Heart right ventricle (tissue), 16 donors: ENCODE measurements at regions of chr10 and their contacts with region 1.

Region 1: DNA sequence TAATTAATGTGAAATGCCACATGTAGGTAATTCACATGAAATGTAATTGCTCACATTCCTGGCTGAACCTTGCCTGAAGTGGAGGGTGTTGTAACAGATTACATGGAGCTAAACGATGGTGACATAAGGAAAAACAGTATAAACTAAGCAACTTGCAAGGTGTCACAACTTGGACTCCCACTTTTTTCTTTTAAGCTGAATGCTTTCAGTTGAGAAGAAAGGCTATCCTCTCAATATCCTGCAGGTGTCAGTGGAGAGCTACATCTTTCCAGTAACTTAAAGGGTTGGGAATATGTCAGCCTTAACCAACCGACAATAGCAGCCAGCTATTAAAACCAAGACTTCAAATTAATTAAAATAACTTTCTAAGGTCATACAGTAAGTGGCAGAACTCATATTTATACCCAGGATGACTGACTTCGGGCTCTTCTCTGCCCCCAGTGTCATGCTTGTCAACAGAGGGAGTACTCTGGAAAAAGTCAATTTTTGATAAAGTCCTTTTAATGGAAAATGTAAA is 33.7 kb downstream of the NRBF2 start:
- DNase-seq: peak in 1 of 2 donors; percentile 61
- ATAC-seq: peak in 7 of 8 donors; percentile 56 to 71 (median 66)
- H3K4me3 ChIP-seq: no peak overlapping the region
- H3K27ac ChIP-seq: no peak overlapping the region
- H3K4me1 ChIP-seq: peaks cover 0 to 39% (median 20%) of the 10 kb centered on the region in 9 donors
- H3K27me3 ChIP-seq: no peaks in the 10 kb centered on the region
- CTCF ChIP-seq: peak; percentile 41 to 91 (median 87)

Region 2: GRCh38 chr10:63767138-63767801 is 600.5 kb after region 1 on chr10:
- intact Hi-C with region 1: loop called in 2 of 10 experiments (anchors 5 kb)
- DNase-seq: no peak
- ATAC-seq: peak in 5 of 8 donors; percentile 34 to 67 (median 57)
- H3K4me3 ChIP-seq: no peak overlapping the region
- H3K27ac ChIP-seq: peak overlapping the region in 8 of 10 donors; percentile 18 to 65 (median 42)
- H3K4me1 ChIP-seq: peaks cover 0 to 23% (median 6%) of the 10 kb centered on the region in 9 donors
- H3K27me3 ChIP-seq: no peaks in the 10 kb centered on the region
- CTCF ChIP-seq: peak in 8 of 9 donors; percentile 27 to 64 (median 48)

Region 3: DNA sequence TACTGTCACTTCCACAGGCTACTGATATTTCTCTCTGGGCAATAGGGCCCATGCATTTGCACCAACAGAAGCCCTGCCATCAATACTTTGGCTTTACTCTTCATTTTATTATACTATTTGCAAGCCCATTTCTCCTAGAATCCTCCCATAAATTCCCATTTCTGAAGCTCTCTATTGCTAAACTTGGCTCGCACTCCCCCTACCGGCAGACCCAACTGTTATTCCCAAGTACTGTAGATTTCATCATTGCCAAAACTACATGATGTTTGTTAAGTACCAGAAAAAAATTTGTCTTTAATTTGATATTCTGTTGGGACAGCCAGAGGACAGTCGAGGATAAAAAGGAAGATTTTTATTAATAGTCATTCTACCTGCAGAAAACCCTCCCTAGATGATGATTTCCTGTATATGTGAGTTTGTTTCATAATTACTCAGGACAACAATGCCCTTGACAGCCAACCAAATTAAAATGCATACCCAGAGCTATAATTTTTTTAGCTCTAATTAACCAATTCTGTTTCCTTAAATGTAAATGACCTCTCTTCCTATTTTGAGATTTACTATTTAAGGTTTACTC is 653.0 kb after region 1 on chr10:
- intact Hi-C with region 1: loop called in 1 of 10 experiments (anchors 5 kb)
- DNase-seq: peak; percentile 68 to 82
- ATAC-seq: peak in 6 of 8 donors; percentile 44 to 71 (median 59)
- H3K4me3 ChIP-seq: no peak overlapping the region
- H3K27ac ChIP-seq: no peak overlapping the region
- H3K4me1 ChIP-seq: peaks cover 0 to 5% (median 0%) of the 10 kb centered on the region in 9 donors
- H3K27me3 ChIP-seq: no peaks in the 10 kb centered on the region
- CTCF ChIP-seq: peak; percentile 58 to 85 (median 78)